Panc1 (cell line): ENCODE measurements at regions of chr22 and their contacts with region 1.

Region 1: GRCh38 chr22:33519071-33519973 is 401.0 kb downstream of the LARGE1 start:
- DNase-seq: no peak
- ATAC-seq: no peak
- H3K4me3 ChIP-seq: no peak overlapping the region
- H3K27ac ChIP-seq: no peak overlapping the region
- H3K4me1 ChIP-seq: no peaks in the 10 kb centered on the region
- H3K27me3 ChIP-seq: no peaks in the 10 kb centered on the region
- CTCF ChIP-seq: peak; percentile 58

Region 2: DNA sequence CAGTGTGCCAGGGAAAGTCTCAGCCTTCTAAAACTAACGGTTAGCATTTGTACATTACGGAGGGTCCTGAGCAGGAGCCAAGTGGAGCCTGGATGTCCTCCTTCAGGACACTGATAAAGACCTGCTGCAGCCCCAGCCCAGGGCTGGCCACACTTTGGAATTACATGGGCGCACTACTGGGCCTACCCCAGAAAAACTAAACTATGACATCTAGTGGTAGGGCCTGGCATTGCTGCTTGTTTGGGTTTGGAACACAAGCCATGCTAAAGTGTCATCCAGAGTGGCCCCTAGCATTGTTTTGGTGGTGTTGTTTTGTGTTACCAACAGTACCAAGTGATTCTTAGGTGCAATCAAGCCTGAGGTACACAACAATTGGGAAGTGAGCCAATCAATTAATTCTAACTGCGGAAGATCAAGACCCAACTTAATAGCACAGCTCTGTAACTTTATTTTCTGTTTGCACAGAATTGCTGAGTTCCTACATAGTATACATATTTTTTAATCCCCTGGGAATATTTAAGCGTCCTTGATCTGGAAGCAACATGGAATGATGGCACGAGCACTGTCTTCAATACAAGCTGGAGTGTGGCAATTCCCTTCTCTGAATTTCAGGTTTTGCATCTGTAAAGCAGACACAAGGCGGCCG is 60.2 kb after region 1 on chr22:
- CTCF ChIA-PET with region 1: no interaction called
- POLR2A ChIA-PET with region 1: no interaction called
- in situ Hi-C with region 1: no loop called
- intact Hi-C with region 1: loop called (anchors 10 kb)
- DNase-seq: peak; percentile 43
- ATAC-seq: peak; percentile 84
- H3K4me3 ChIP-seq: no peak overlapping the region
- H3K27ac ChIP-seq: no peak overlapping the region
- H3K4me1 ChIP-seq: no peaks in the 10 kb centered on the region
- H3K27me3 ChIP-seq: no peaks in the 10 kb centered on the region
- CTCF ChIP-seq: peak; percentile 81

Region 3: DNA sequence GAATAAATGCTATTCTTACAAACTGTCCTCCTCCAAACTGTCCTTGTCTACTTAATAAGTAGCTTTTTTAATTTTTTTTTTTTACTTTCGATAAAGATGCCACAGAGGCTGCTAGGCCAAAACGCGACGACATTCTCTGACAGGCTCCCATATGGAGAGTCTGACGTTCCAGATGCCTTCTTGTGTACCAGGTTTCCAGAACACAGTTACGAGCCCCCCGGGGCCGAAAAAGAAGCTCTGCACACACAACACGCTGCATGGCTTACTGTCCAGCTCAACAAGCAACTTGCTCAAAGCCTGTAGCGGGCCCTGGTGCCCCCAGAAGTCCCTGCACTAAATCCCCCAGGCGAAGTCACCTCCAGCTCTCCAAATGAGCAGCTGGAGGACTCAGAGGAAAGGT is 361.7 kb after region 1 on chr22:
- CTCF ChIA-PET with region 1: interaction called, 11 read pairs
- POLR2A ChIA-PET with region 1: no interaction called
- in situ Hi-C with region 1: no loop called
- intact Hi-C with region 1: no loop called
- DNase-seq: no peak
- ATAC-seq: no peak
- H3K4me3 ChIP-seq: no peak overlapping the region
- H3K27ac ChIP-seq: no peak overlapping the region
- H3K4me1 ChIP-seq: no peaks in the 10 kb centered on the region
- H3K27me3 ChIP-seq: no peaks in the 10 kb centered on the region
- CTCF ChIP-seq: no peak

Region 4: DNA sequence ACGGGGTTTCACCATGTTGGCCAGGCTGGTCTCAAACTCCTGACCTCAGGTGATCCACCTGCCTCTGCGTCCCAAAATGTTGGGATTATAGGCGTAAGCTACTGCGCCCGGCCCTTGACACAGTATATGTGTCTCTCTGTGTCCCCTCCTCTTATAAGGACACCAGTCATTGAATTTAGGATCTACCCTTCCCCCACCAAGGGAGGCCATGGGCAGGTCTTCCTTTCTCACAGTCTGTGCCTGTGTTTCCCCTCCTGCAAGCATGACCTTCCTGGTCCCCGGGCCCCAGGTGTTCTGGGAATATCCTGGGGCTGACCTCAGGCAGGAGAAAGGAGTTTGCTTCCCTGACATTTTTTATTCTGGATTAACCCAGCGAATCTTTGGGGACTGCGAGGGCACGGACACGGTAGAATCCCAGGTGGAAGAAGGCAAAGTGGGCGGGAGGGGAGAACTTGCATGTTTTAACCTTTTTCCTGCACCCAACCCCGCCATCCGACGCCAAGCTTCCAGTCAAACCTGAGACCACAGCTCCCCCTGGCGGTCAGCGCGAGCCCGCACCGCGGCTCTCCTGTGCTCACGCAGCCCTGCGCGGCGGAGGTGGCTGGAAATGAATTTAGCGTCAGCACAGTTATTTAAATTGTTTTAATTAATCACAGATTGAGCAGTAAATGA is 1504.5 kb after region 1 on chr22:
- CTCF ChIA-PET with region 1: interaction called, 12 read pairs
- POLR2A ChIA-PET with region 1: no interaction called
- in situ Hi-C with region 1: no loop called
- intact Hi-C with region 1: no loop called
- DNase-seq: peak; percentile 13
- ATAC-seq: peak; percentile 85
- H3K4me3 ChIP-seq: no peak overlapping the region
- H3K27ac ChIP-seq: no peak overlapping the region
- H3K4me1 ChIP-seq: no peaks in the 10 kb centered on the region
- H3K27me3 ChIP-seq: no peaks in the 10 kb centered on the region
- CTCF ChIP-seq: peak; percentile 90